Adrenal gland (tissue), 19 donors: ENCODE measurements at regions of chr3 and their contacts with region 1.

Region 1: DNA sequence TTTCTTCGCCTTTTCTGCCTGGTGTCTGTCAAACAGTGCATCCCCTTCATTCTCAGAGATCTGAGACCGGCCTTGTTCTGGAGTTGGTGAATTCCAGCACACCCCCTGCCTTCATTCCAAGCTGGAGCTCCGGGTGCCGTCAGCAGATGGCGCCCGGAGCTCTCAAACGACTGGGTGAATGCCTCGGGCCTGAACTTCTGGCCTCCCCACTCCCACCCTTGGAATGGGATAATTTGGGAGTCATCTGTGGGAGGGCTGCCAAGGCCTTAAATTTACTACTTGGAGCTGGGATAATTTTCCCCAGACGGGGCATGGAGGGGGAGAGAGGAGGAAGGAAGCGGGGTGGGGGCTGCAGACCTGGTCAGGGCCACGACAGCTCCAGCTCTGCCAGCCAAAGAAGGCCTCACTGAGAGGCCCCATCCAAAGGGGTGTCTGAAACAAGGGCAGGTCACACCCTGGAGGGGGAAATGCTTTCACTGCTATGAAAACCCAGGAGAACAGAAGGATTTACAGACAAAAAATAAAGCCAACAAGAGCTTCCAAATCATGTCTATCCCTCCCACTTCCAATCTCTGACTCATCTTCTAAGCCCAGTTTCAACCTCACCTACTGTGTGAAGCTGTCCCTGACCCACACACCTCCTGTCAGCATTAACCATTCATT is 187.9 kb downstream of the OPA1 start:
- DNase-seq: peak; percentile 68 to 84 (median 79)
- H3K4me3 ChIP-seq: no peak overlapping the region
- H3K27ac ChIP-seq: peak overlapping the region in 1 of 5 donors; percentile 78
- H3K4me1 ChIP-seq: peaks cover 0 to 2% of the 10 kb centered on the region in 2 donors
- H3K27me3 ChIP-seq: peaks cover 16% of the 10 kb centered on the region
- CTCF ChIP-seq: peak; percentile 63 to 80 (median 69)
- POLR2A ChIP-seq: no peak

Region 2: DNA sequence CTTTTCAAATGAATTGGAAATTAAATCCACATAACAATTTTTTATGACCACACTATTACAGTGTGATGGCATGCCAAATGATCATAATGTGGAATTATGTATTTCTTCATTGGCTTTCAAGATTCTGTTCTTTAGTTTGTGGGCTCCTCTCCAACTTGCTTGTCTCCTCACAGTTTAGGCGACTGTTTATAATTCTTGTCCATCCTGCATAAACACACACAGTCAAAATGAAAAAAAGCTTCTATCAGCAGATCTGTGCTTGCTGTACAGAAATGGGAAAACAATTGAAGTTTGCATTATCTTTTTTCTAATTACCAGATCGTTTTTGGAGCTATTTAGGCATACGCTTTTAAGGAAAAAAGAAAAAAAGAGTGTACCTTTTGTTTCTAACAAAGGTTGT is 150.9 kb before region 1 on chr3:
- intact Hi-C with region 1: no loop called
- DNase-seq: no peak
- H3K4me3 ChIP-seq: no peak overlapping the region
- H3K27ac ChIP-seq: no peak overlapping the region
- H3K4me1 ChIP-seq: no peaks in the 10 kb centered on the region
- H3K27me3 ChIP-seq: no peaks in the 10 kb centered on the region
- CTCF ChIP-seq: no peak
- POLR2A ChIP-seq: no peak

Region 3: DNA sequence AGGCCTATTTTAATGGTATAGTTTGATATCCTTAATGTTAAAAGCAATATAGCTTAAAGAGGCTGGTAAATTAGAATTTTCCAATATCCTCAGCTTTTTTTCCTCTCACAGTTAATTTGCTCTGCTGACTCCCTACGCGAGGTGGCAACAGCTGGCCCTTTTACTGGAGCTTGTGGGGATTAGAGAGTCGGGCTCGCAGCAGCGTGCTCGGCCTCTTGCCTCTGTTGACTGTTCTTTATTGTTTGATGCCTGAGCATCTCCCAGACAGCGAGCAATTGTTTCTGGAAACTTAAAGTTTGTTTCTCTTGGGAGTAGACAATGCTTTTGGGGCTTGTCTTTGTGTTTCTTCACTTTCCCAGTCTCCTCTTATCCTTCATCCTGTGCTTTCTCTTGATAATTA is 107.1 kb before region 1 on chr3:
- intact Hi-C with region 1: no loop called
- DNase-seq: no peak
- H3K4me3 ChIP-seq: no peak overlapping the region
- H3K27ac ChIP-seq: no peak overlapping the region
- H3K4me1 ChIP-seq: no peaks in the 10 kb centered on the region
- H3K27me3 ChIP-seq: no peaks in the 10 kb centered on the region
- CTCF ChIP-seq: no peak
- POLR2A ChIP-seq: no peak

Region 4: GRCh38 chr3:194129581-194130133 is 348.7 kb after region 1 on chr3:
- intact Hi-C with region 1: loop called in 1 of 2 experiments (anchors 5 kb)
- DNase-seq: peak in 1 of 7 donors; percentile 13
- H3K4me3 ChIP-seq: no peak overlapping the region
- H3K27ac ChIP-seq: peak overlapping the region in 1 of 5 donors; percentile 55
- H3K4me1 ChIP-seq: peaks cover 5 to 7% of the 10 kb centered on the region in 2 donors
- H3K27me3 ChIP-seq: no peaks in the 10 kb centered on the region
- CTCF ChIP-seq: no peak
- POLR2A ChIP-seq: no peak